Activated CD8-positive, alpha-beta T cell treated with anti-CD3 and anti-CD28 coated beads, Interleukin-2, amount 10 ng/mL, durations not matched to agents 7 days and 5 days (primary cell): ENCODE measurements at regions of chr6 and their contacts with region 1.

Region 1: GRCh38 chr6:26342106-26343004 is 22.6 kb upstream of the BTN3A2 start:
- DNase-seq: no peak
- ATAC-seq: peak; percentile 25
- H3K4me3 Mint-ChIP-seq: peak overlapping the region; percentile 71
- H3K27ac Mint-ChIP-seq: peak overlapping the region; percentile 58
- H3K4me1 Mint-ChIP-seq: peaks cover 33% of the 10 kb centered on the region
- H3K27me3 Mint-ChIP-seq: peaks cover 4% of the 10 kb centered on the region

Region 2: DNA sequence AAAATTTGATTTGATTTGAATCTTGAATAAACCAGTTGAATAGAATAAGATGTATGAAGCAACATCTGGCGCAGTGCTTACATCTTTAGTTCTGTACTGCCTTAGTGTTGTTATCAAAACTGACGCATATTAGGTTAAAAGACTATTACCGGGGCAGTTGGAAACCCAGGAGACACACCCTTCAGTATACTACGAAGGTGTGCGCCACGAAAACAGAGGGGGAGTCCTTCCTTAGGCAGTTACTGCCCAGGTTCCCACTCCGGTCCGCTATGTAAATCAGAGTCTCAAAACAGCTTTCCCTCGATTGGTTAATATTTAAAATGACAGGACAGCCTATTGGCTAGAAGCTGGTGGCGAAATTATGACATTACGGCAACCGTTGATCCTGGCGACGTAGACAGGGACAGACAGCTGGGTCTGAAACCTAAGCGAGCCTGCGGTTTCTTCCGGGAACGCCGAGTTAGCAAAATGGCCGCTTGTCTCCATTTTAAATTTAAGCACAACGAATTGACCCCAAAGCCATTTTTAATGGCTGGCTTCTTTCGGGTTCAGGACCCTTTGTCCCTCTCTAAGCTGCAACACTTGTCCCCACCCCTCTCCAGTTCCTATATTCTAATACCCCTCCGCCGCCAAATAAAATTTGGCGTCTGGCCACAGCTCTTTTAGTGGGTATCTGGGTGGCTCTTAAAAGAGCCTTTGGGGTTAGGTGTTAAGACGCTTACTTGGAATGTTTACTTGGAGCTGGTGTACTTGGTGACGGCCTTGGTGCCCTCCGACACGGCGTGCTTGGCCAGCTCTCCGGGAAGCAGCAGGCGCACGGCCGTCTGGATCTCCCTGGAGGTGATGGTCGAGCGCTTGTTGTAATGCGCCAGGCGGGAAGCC is 219.3 kb before region 1 on chr6:
- CTCF ChIA-PET with region 1: no interaction called
- POLR2A ChIA-PET with region 1: no interaction called
- DNase-seq: peak; percentile 98
- ATAC-seq: peak; percentile 50
- H3K4me3 Mint-ChIP-seq: peak overlapping the region; percentile 95
- H3K27ac Mint-ChIP-seq: peak overlapping the region; percentile 100
- H3K4me1 Mint-ChIP-seq: peaks cover 44% of the 10 kb centered on the region
- H3K27me3 Mint-ChIP-seq: peaks cover 1% of the 10 kb centered on the region

Region 3: DNA sequence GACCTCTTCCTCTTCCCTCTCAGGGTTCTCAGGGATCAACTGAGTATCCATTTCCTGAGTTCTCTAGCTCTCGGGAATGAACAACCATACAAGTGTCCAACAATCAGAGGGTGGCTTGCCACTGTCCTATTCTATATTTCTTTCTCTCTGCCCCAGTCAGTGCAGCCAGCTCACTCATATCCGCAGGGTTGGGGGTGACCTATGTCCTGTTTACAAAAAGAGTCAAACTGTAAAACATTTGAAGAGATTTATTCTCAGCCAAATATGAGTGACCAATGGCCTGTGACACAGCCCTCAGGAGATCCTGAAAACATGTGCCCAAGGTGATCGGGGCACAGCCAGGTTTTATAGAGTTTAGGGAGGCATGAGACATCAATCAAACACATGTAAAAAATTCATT is 11.8 kb after region 1 on chr6:
- CTCF ChIA-PET with region 1: interaction called, 13 read pairs
- POLR2A ChIA-PET with region 1: interaction called, 3 read pairs
- DNase-seq: no peak
- ATAC-seq: no peak
- H3K4me3 Mint-ChIP-seq: no peak overlapping the region
- H3K27ac Mint-ChIP-seq: no peak overlapping the region
- H3K4me1 Mint-ChIP-seq: peaks cover 9% of the 10 kb centered on the region
- H3K27me3 Mint-ChIP-seq: peaks cover 2% of the 10 kb centered on the region

Region 4: GRCh38 chr6:26473758-26474438 is 131.5 kb after region 1 on chr6:
- CTCF ChIA-PET with region 1: interaction called, 11 read pairs
- POLR2A ChIA-PET with region 1: interaction called, 3 read pairs
- DNase-seq: peak; percentile 89
- ATAC-seq: peak; percentile 98
- H3K4me3 Mint-ChIP-seq: peak overlapping the region; percentile 100
- H3K27ac Mint-ChIP-seq: peak overlapping the region; percentile 100
- H3K4me1 Mint-ChIP-seq: peaks cover 35% of the 10 kb centered on the region
- H3K27me3 Mint-ChIP-seq: no peaks in the 10 kb centered on the region

Region 5: GRCh38 chr6:26532699-26533531 is 190.6 kb after region 1 on chr6:
- CTCF ChIA-PET with region 1: interaction called, 20 read pairs
- POLR2A ChIA-PET with region 1: interaction called, 6 read pairs
- DNase-seq: peak; percentile 95
- ATAC-seq: peak; percentile 38
- H3K4me3 Mint-ChIP-seq: peak overlapping the region; percentile 88
- H3K27ac Mint-ChIP-seq: peak overlapping the region; percentile 85
- H3K4me1 Mint-ChIP-seq: peaks cover 40% of the 10 kb centered on the region
- H3K27me3 Mint-ChIP-seq: peaks cover 2% of the 10 kb centered on the region

Region 6: DNA sequence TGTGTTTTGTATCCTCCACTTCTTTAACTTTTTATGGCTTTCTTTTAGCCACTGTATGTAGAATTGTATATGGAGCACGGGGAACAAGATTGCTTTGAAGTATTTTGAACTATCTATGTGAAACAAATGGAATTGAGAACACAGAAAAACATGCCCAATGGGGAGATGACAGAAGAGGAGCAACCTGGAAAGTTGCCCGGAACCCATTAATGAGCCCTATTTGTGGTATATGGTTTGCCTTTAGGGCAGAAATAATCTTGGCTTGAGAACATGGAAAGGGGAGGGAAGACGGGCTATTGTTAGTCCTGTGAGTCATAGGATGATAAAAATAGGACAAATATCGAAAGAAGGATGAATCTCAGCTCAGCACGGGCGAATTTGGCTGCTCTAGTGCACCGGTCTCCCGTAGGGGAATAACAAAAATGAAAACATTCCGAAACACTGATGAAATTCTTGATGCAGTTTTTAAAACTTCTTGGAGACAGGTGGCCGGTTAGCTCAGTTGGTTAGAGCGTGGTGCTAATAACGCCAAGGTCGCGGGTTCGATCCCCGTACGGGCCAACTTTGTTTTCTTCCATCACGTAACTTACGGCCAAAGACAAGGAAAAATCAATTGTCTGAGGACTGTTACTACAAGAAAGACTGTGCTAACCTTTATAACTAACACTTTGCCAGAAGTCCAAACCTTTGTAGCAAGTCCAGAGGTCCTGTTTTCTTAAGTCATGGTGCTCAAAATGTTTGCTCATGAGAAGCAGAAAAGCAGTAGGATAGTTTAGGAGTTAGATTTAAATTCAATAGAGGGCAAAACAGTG is 211.5 kb after region 1 on chr6:
- CTCF ChIA-PET with region 1: interaction called, 21 read pairs
- POLR2A ChIA-PET with region 1: interaction called, 3 read pairs
- DNase-seq: peak; percentile 89
- ATAC-seq: peak; percentile 59
- H3K4me3 Mint-ChIP-seq: no peak overlapping the region
- H3K27ac Mint-ChIP-seq: no peak overlapping the region
- H3K4me1 Mint-ChIP-seq: peaks cover 36% of the 10 kb centered on the region
- H3K27me3 Mint-ChIP-seq: no peaks in the 10 kb centered on the region

Region 7: DNA sequence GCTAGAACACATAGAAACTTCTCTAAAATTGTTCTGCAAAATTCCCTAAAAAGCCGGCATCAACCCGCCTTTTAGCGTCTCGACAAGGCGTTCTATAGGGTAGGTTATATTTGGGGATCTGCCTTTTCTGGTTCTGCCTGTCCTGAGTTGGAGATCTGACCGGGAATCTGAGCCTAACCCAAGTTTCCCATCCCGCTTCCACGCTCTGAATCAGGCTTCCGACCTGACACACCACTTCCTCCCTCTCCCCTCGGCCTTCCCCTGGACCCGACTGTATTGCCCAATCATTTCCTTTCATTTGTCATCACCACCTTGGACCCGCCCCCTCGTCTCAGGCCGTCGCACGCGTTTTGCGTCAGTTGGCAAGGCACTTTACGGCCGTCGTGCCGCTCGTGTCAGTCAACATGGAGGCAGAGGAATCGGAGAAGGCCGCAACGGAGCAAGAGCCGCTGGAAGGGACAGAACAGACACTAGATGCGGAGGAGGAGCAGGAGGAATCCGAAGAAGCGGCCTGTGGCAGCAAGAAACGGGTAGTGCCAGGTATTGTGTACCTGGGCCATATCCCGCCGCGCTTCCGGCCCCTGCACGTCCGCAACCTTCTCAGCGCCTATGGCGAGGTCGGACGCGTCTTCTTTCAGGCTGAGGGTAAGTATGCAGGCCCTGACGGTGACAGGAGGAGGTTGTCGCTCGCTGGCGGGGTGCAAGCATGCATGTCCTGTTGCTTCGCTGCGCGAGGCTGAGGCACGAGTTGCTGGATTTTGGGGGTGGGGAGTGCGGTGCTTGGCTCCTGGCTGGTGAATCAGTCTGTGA is 254.4 kb after region 1 on chr6 and contains the start of gene ABT1:
- CTCF ChIA-PET with region 1: interaction called, 58 read pairs
- POLR2A ChIA-PET with region 1: interaction called, 3 read pairs
- DNase-seq: peak; percentile 98
- ATAC-seq: peak; percentile 89
- H3K4me3 Mint-ChIP-seq: no peak within 1 kb of the TSS
- H3K27ac Mint-ChIP-seq: peak within 1 kb of the TSS; percentile 59
- H3K4me1 Mint-ChIP-seq: peaks cover 31% of the 10 kb centered on the region
- H3K27me3 Mint-ChIP-seq: peaks cover 18% of the 10 kb centered on the region
- total RNA-seq, gene ABT1: 25.0 to 25.3 TPM